ENCODE measurements at regions of chr19 and their contacts with region 1.

Region 1: DNA sequence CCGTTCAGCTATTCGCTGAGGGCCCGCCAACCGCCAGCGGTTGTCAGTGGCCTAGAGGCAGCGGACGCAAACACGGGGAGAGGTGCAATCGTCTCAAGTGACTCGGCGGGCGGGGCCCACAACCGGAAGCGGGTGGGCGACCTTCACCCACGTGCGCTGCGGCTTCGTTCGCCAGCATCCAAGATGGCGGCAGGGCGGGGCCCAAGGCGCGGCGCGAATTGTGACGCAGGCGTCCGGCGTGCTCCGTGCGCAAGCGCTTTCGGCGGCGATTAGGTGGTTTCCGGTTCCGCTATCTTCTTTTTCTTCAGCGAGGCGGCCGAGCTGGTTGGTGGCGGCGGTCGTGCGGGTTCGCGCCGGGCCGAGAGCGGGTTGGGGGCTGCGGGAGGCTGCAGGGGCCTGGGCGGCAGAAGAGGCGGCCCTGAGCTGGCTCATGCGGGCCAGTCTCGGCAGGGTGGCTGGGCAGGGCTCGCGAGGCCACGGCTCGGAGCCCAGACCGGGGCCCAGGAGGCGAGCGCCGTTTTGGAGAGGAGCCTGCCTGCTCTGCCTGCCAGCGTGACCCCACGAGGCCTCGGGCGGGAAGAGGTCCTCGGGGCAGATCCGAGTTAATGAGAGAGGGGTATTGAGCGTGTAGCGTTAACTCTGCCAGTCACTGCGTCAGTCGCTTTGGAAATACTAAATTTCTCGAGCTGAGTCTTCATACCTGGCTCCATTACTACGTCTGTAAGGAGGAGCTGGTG is at the start of gene UBA52:
- DNase-seq: peak; percentile 98 to 99 (median 98)
- H3K4me3 ChIP-seq: peak within 1 kb of the TSS; percentile 83 to 94 (median 93)
- H3K4me3 Mint-ChIP-seq: peak within 1 kb of the TSS; percentile 89 to 96
- H3K27ac ChIP-seq: peak within 1 kb of the TSS; percentile 85 to 97
- H3K27ac Mint-ChIP-seq: peak within 1 kb of the TSS; percentile 94 to 98 (median 97)
- H3K4me1 ChIP-seq: peaks cover 16 to 22% of the 10 kb centered on the region in 2 donors
- H3K4me1 Mint-ChIP-seq: peaks cover 19% of the 10 kb centered on the region
- H3K27me3 ChIP-seq: no peaks in the 10 kb centered on the region
- H3K27me3 Mint-ChIP-seq: peaks cover 0 to 3% (median 0%) of the 10 kb centered on the region in 3 donors
- CTCF ChIP-seq: no peak
- polyA plus RNA-seq, gene UBA52: 832 to 3,024 (median 896) TPM

Region 2: GRCh38 chr19:18478569-18479311 is 93.0 kb before region 1 on chr19:
- intact Hi-C with region 1: loop called in 1 of 2 experiments (anchors 5 kb)
- DNase-seq: peak; percentile 98 to 99 (median 99)
- H3K4me3 ChIP-seq: peak overlapping the region in 2 of 3 experiments; percentile 14 to 58
- H3K4me3 Mint-ChIP-seq: peak overlapping the region; percentile 60 to 84
- H3K27ac ChIP-seq: peak overlapping the region; percentile 96 to 97
- H3K27ac Mint-ChIP-seq: peak overlapping the region; percentile 97 to 99 (median 99)
- H3K4me1 ChIP-seq: peaks cover 84 to 95% of the 10 kb centered on the region in 2 donors
- H3K4me1 Mint-ChIP-seq: peaks cover 82% of the 10 kb centered on the region
- H3K27me3 ChIP-seq: no peaks in the 10 kb centered on the region
- H3K27me3 Mint-ChIP-seq: peaks cover 0 to 3% (median 0%) of the 10 kb centered on the region in 3 donors
- CTCF ChIP-seq: no peak

Region 3: GRCh38 chr19:18529782-18530181 is 42.0 kb before region 1 on chr19:
- intact Hi-C with region 1: loop called in 1 of 2 experiments (anchors 5 kb)
- DNase-seq: no peak
- H3K4me3 ChIP-seq: no peak overlapping the region
- H3K4me3 Mint-ChIP-seq: no peak overlapping the region
- H3K27ac ChIP-seq: no peak overlapping the region
- H3K27ac Mint-ChIP-seq: peak overlapping the region in 2 of 7 donors; percentile 8 to 74
- H3K4me1 ChIP-seq: peaks cover 0 to 3% of the 10 kb centered on the region in 2 donors
- H3K4me1 Mint-ChIP-seq: peaks cover 8% of the 10 kb centered on the region
- H3K27me3 ChIP-seq: no peaks in the 10 kb centered on the region
- H3K27me3 Mint-ChIP-seq: peaks cover 0 to 2% (median 0%) of the 10 kb centered on the region in 3 donors
- CTCF ChIP-seq: no peak

Region 4: GRCh38 chr19:18542936-18543815 is 28.6 kb before region 1 on chr19 and contains the start of gene FKBP8:
- intact Hi-C with region 1: loop called in 1 of 2 experiments (anchors 5 kb)
- DNase-seq: peak; percentile 84 to 89 (median 88)
- H3K4me3 ChIP-seq: peak within 1 kb of the TSS; percentile 64 to 80 (median 65)
- H3K4me3 Mint-ChIP-seq: peak within 1 kb of the TSS; percentile 91
- H3K27ac ChIP-seq: peak within 1 kb of the TSS; percentile 72 to 82
- H3K27ac Mint-ChIP-seq: peak within 1 kb of the TSS; percentile 93 to 98 (median 95)
- H3K4me1 ChIP-seq: peaks cover 21 to 26% of the 10 kb centered on the region in 2 donors
- H3K4me1 Mint-ChIP-seq: peaks cover 30% of the 10 kb centered on the region
- H3K27me3 ChIP-seq: no peaks in the 10 kb centered on the region
- H3K27me3 Mint-ChIP-seq: peaks cover 0 to 5% (median 0%) of the 10 kb centered on the region in 3 donors
- CTCF ChIP-seq: no peak
- polyA plus RNA-seq, gene FKBP8: 78.0 to 159 (median 81.2) TPM

Region 5: GRCh38 chr19:18557474-18558201 is 14.1 kb before region 1 on chr19 and contains the start of gene KXD1:
- intact Hi-C with region 1: loop called in 1 of 2 experiments (anchors 2 kb)
- DNase-seq: peak; percentile 99 to 100 (median 100)
- H3K4me3 ChIP-seq: peak within 1 kb of the TSS; percentile 75 to 96 (median 95)
- H3K4me3 Mint-ChIP-seq: peak within 1 kb of the TSS; percentile 88 to 90
- H3K27ac ChIP-seq: peak within 1 kb of the TSS; percentile 69 to 97
- H3K27ac Mint-ChIP-seq: peak within 1 kb of the TSS; percentile 93 to 97 (median 95)
- H3K4me1 ChIP-seq: peaks cover 14 to 17% of the 10 kb centered on the region in 2 donors
- H3K4me1 Mint-ChIP-seq: peaks cover 16% of the 10 kb centered on the region
- H3K27me3 ChIP-seq: no peaks in the 10 kb centered on the region
- H3K27me3 Mint-ChIP-seq: peaks cover 0 to 3% (median 0%) of the 10 kb centered on the region in 3 donors
- CTCF ChIP-seq: no peak
- polyA plus RNA-seq, gene KXD1: 74.4 to 194 (median 87.9) TPM

Region 6: DNA sequence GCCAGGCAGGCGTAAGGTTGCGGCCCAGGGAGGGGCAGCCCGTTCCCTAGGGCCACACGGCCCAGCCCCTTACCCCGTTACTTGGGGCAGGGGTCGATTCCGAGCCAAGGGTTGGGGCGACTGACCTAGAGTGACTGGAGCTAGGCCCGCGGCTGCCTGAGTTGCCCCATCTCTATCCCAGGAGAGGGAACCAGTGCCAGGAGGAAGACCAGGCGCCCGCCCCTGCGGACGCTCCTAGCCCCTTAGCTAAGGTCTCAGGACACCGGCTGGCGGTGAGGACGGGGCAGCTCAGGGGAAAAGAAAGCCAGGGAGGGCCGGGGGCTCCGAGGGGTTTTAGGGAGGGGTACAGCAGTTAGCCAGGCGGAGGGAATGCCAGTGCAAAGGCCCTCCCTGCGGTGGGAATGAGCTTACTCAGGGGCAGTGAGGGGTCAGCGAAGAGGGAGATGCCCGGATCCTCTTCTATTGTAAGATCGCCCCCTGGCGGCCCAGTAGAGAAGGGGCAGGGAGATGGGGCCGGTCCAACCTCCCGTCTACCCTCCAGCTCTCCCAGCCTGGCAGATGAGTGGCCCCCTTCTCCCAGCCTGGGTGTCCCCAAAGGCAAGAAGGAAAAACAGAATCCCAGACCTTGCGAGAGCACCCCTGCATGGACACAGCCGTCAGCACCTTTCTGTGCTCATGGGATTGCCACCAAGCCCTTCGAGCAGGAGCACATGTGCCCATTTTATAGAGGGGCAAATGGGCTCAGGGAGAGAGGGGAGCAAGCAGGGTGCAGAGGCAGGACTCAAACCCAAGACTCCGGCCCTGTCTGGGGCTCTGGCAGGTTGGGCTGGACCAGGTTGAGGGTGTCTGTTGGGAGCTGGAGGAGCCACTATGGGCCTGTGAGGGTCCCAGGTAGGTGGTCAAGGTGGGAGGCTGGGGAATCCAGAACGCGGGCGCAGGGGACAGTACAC is 982.6 kb after region 1 on chr19:
- intact Hi-C with region 1: no loop called
- DNase-seq: peak; percentile 39 to 68 (median 61)
- H3K4me3 ChIP-seq: no peak overlapping the region
- H3K4me3 Mint-ChIP-seq: no peak overlapping the region
- H3K27ac ChIP-seq: no peak overlapping the region
- H3K27ac Mint-ChIP-seq: no peak overlapping the region
- H3K4me1 ChIP-seq: peaks cover 0 to 1% of the 10 kb centered on the region in 2 donors
- H3K4me1 Mint-ChIP-seq: peaks cover 1% of the 10 kb centered on the region
- H3K27me3 ChIP-seq: no peaks in the 10 kb centered on the region
- H3K27me3 Mint-ChIP-seq: peaks cover 2 to 6% (median 3%) of the 10 kb centered on the region in 3 donors
- CTCF ChIP-seq: peak; percentile 88

Measured in CD14-positive monocyte (primary cell).